ENCODE measurements at regions of chr6 and their contacts with region 1.

Region 1: GRCh38 chr6:42043787-42044475 is 6.4 kb upstream of the TAF8 start:
- DNase-seq: peak; percentile 88 to 93
- ATAC-seq: peak; percentile 86 to 93 (median 92)
- H3K4me3 ChIP-seq: peak overlapping the region; percentile 25
- H3K27ac ChIP-seq: no peak overlapping the region
- H3K4me1 ChIP-seq: peaks cover 40% of the 10 kb centered on the region
- H3K27me3 ChIP-seq: peaks cover 0 to 10% (median 0%) of the 10 kb centered on the region in 3 donors
- CTCF ChIP-seq: peak; percentile 99

Region 2: DNA sequence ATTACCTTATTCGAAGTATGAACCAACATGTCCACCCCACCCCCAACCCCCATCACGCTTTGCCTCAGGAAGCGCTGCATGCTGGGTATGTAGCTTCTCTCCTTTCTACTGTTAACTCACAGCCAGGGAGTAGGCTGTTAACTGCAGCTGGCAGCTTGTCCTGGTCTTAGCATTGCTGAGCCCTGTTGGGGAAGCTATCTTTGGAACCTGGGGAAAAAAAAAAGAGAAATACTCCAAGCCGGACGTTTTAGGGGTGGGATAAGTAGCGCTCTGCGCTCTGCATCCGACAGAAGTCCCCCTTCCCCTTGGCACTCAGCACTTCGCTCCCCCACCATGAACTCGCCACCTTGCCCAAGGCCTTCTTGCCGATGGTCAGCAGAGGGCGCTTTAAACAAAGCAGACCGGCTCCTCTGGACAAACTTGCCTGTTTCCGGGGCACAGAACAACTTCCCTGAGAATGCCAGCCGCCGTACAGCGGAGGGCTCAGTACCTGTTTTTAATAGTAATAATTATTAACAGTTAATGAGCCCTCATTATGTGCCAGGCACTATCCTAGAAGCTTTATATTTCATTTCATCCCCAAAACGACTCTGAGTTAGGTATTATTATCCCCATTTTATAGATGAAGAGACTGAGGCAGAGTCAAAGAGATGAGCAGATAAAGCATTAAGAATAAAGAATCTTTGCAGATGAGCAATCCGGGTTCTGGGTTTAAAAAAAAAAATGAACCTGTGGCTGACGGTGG is 440.9 kb before region 1 on chr6:
- intact Hi-C with region 1: loop called in 1 of 2 experiments (anchors 5 kb)
- DNase-seq: peak; percentile 78 to 84
- ATAC-seq: peak; percentile 75 to 91 (median 81)
- H3K4me3 ChIP-seq: peak overlapping the region; percentile 31
- H3K27ac ChIP-seq: no peak overlapping the region
- H3K4me1 ChIP-seq: peaks cover 4% of the 10 kb centered on the region
- H3K27me3 ChIP-seq: no peaks in the 10 kb centered on the region
- CTCF ChIP-seq: peak; percentile 90

Region 3: DNA sequence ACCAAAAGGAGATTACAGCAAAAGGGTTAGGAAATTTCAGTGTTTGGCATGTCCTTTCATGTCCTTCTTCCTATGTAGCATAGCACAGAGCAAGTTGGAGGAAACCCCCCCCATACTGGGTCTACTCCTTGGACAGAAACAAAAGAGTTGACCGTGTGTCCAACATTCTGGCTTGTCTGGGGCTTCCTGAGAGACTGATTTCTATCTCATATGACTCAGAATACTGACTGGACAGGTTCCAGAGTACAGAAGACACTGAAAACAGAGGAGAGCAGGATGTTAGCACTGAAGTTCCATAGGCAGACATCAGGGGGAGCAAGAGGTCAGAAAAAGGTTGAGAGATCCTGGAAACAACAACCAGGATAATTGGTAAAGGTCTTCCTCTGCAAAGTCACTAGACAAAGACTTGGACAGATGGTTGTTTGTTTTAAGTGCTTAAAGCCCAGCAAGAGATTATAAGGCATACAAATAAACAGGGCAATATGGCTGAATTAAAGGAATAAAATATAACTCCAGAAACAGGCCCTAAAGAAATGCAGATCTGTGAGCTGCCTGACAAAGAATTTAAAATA is 197.2 kb before region 1 on chr6:
- intact Hi-C with region 1: loop called (anchors 2 to 5 kb)
- DNase-seq: no peak
- ATAC-seq: peak; percentile 61 to 93 (median 88)
- H3K4me3 ChIP-seq: no peak overlapping the region
- H3K27ac ChIP-seq: peak overlapping the region; percentile 42
- H3K4me1 ChIP-seq: no peaks in the 10 kb centered on the region
- H3K27me3 ChIP-seq: no peaks in the 10 kb centered on the region
- CTCF ChIP-seq: peak; percentile 73

Region 4: GRCh38 chr6:41936073-41936837 is 107.7 kb before region 1 on chr6:
- intact Hi-C with region 1: loop called (anchors 2 to 5 kb)
- DNase-seq: peak; percentile 67 to 85
- ATAC-seq: peak; percentile 87 to 96 (median 92)
- H3K4me3 ChIP-seq: peak overlapping the region; percentile 2
- H3K27ac ChIP-seq: peak overlapping the region; percentile 7
- H3K4me1 ChIP-seq: peaks cover 18% of the 10 kb centered on the region
- H3K27me3 ChIP-seq: no peaks in the 10 kb centered on the region
- CTCF ChIP-seq: peak; percentile 81